CD8-positive, alpha-beta memory T cell (primary cell): ENCODE measurements at regions of chr4 and their contacts with region 1.

Region 1: DNA sequence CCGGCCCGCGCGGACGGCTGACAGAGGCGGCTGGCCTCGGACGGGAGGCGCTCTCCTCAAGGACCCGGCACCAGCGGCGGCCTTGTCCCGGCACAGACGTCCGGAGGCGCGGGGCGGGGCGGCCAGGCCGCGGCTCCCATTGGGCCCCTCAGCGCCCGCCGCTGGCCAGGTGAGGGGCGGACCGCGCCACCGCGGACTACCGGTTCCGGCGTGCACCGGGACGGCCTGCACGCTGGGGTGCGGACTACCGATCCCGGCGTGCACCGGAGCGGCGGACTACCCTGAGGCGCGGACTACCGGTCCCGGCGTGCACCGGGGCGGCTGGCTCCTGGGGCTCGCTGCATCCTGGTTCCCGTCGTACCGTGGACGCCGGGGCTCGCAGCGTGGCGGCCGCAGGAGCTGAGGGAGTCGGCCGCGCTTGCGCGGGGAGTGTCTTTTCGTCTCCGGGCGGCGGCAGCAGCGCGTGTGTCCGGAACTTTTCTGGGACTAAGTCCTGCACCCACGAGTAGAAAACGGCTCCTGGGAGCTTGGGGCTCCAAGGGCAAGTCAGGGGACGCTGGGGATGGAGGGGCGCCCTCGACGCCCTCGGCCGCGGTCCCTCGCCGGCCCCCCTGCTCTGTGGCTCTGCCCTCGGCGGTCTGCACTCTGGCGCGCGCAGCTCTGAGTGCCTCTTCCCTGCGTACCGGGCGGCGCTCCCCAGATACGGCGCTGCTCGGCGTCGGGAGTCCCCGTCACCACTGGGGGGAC is at the start of gene LETM1:
- DNase-seq: peak; percentile 86 to 93 (median 89)
- H3K4me3 ChIP-seq: peak within 1 kb of the TSS; percentile 74
- H3K4me3 Mint-ChIP-seq: peak within 1 kb of the TSS; percentile 78 to 92 (median 83)
- H3K27ac ChIP-seq: peak within 1 kb of the TSS; percentile 59
- H3K27ac Mint-ChIP-seq: peak within 1 kb of the TSS in 7 of 8 donors; percentile 42 to 91 (median 66)
- H3K4me1 ChIP-seq: peaks cover 17% of the 10 kb centered on the region
- H3K4me1 Mint-ChIP-seq: peaks cover 31 to 44% (median 37%) of the 10 kb centered on the region in 3 donors
- H3K27me3 ChIP-seq: no peaks in the 10 kb centered on the region
- H3K27me3 Mint-ChIP-seq: peaks cover 0 to 2% of the 10 kb centered on the region in 2 donors
- total RNA-seq, gene LETM1: 85.4 to 87.3 TPM

Region 2: DNA sequence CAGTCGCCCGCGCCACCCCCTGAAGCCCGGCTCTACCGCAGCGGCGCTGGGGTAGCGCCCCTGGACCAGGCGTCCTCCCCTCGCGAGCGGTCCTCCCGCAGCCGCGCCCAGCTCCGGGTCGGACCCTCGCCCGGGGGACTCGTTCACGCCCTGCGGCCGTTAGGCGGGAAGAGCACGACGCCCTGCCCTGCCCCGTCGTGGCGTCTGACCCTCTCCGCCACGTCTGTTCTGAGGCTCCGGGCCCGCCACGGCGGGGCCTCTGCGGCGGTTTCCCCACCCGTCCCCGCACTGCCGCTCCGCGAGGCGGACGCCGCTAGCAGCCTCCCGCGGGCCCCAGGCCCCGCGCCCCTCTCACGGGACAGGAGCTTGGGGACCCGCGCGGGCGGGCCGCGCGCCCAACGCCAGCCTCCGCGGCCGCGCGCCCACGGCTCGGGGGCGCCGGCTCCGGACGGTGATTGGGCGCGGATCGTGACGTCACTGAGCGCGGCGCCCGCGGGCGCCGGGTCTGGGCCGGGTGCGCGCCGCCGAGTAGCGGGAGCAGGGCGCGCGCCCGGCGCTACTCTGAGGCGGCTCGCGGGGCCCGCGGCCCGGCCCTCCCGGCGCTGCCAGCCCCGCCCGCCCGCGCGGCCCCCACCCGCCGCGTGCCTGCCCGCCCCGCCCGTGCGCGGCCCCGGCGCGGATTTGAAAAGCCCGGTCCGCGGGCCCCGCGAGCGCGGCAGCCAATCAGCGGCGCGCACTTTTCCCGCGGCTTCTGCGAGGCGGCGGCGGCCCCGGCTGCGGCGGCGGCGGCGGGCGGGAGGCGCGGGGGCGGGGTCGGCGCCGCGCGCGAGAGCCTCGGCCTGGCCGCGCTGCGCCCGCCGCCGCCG is 14.6 kb after region 1 on chr4 and contains the start of gene NSD2:
- CTCF ChIA-PET with region 1: interaction called, 4 read pairs
- POLR2A ChIA-PET with region 1: interaction called, 27 read pairs
- DNase-seq: peak; percentile 85 to 92 (median 85)
- H3K4me3 ChIP-seq: peak within 1 kb of the TSS; percentile 81
- H3K4me3 Mint-ChIP-seq: peak within 1 kb of the TSS; percentile 84 to 97 (median 89)
- H3K27ac ChIP-seq: peak within 1 kb of the TSS; percentile 97
- H3K27ac Mint-ChIP-seq: peak within 1 kb of the TSS; percentile 93 to 99 (median 95)
- H3K4me1 ChIP-seq: peaks cover 17% of the 10 kb centered on the region
- H3K4me1 Mint-ChIP-seq: peaks cover 35 to 37% (median 37%) of the 10 kb centered on the region in 3 donors
- H3K27me3 ChIP-seq: no peaks in the 10 kb centered on the region
- H3K27me3 Mint-ChIP-seq: peaks cover 0 to 6% of the 10 kb centered on the region in 2 donors
- total RNA-seq, gene NSD2: 150 to 152 TPM